ENCODE measurements at regions of chr10 and their contacts with region 1.

Region 1: DNA sequence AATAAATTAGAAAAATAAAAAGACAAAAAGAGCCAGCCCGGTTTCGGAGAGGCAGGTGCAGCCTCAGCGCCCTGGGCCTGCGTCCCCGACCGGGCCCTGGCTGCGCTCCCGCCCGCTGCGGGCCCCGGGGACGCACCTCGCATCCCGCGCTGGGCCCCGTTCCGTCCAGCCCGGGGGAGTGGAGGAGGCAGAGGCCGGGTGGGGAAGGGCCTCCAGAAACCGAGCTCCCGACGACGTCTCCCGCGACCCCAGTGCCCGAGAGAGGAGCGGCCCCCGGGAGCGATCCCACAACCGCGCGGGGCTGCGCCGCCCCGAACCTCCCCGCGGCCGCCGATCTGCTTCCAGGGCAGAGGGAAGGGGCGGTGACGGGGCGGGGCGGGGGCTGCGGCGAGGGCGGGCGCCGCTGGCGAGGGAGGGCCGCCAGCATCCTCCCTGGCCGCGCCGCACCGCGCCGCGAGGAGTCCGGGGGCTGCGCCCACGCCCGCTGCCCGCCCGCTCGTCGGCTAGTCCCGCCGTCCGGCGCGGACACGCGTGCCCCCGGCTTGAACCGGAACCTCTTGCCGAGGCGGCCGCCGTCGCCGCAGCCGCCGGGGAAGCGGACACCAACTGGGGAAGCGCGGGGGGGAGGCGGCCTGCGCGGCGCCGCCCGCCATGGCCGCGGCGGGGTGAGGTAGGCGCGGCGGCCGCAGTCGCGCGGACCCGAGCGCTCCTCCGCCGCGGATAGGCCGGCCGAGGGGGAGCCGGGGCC is at the start of gene CCNY:
- DNase-seq: peak in 1 of 2 experiments; percentile 67
- H3K4me3 ChIP-seq: peak within 1 kb of the TSS; percentile 82
- H3K27ac ChIP-seq: peak within 1 kb of the TSS; percentile 39
- H3K4me1 ChIP-seq: peaks cover 42% of the 10 kb centered on the region
- H3K27me3 ChIP-seq: no peaks in the 10 kb centered on the region
- CTCF ChIP-seq: no peak
- total RNA-seq, gene CCNY: 54.9 and 69.5 TPM in 2 replicates

Region 2: GRCh38 chr10:35126530-35127296 is 209.5 kb before region 1 on chr10 and contains the start of gene CREM:
- CTCF ChIA-PET with region 1: no interaction called
- POLR2A ChIA-PET with region 1: no interaction called
- intact Hi-C with region 1: loop called (anchors 10 kb)
- DNase-seq: peak; percentile 73 to 97
- H3K4me3 ChIP-seq: peak within 1 kb of the TSS; percentile 90
- H3K27ac ChIP-seq: peak within 1 kb of the TSS; percentile 88
- H3K4me1 ChIP-seq: peaks cover 16% of the 10 kb centered on the region
- H3K27me3 ChIP-seq: no peaks in the 10 kb centered on the region
- CTCF ChIP-seq: peak; percentile 86
- total RNA-seq, gene CREM: 25.6 and 28.3 TPM in 2 replicates

Region 3: DNA sequence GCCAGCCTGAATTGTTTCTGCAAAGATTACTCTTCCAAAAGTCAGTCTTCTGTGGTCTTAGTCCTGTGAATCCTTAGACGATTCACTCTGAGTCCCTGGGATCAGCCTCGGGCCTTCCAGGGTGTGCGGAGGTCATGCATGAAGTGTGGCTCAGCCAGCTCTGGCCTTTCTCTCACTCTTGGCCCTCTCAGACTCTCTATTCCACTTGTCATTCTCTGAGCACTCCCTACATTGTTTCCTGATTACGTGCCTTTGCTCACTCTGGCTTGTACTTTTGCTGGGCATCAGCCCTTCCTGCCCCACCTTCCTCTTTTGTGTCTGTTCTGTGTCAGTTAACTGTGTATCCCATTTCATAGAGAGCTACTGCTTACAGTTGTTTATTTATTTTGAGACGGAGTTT is 36.1 kb after region 1 on chr10:
- CTCF ChIA-PET with region 1: no interaction called
- POLR2A ChIA-PET with region 1: no interaction called
- intact Hi-C with region 1: loop called (anchors 5 kb)
- DNase-seq: peak in 1 of 2 experiments; percentile 71
- H3K4me3 ChIP-seq: no peak overlapping the region
- H3K27ac ChIP-seq: no peak overlapping the region
- H3K4me1 ChIP-seq: no peaks in the 10 kb centered on the region
- H3K27me3 ChIP-seq: no peaks in the 10 kb centered on the region
- CTCF ChIP-seq: no peak

Region 4: GRCh38 chr10:35421553-35422178 is 85.4 kb after region 1 on chr10:
- CTCF ChIA-PET with region 1: no interaction called
- POLR2A ChIA-PET with region 1: interaction called, 7 read pairs
- intact Hi-C with region 1: loop called (anchors 5 kb)
- DNase-seq: peak; percentile 53 to 78
- H3K4me3 ChIP-seq: no peak overlapping the region; the same call in 1 of the 2 replicates
- H3K27ac ChIP-seq: peak overlapping the region; percentile 80
- H3K4me1 ChIP-seq: peaks cover 46% of the 10 kb centered on the region
- H3K27me3 ChIP-seq: no peaks in the 10 kb centered on the region
- CTCF ChIP-seq: no peak

Region 5: GRCh38 chr10:35552621-35553342 is 216.5 kb after region 1 on chr10:
- CTCF ChIA-PET with region 1: no interaction called
- POLR2A ChIA-PET with region 1: no interaction called
- intact Hi-C with region 1: loop called (anchors 1 kb)
- DNase-seq: peak; percentile 35 to 74
- H3K4me3 ChIP-seq: no peak overlapping the region
- H3K27ac ChIP-seq: no peak overlapping the region
- H3K4me1 ChIP-seq: peaks cover 7% of the 10 kb centered on the region
- H3K27me3 ChIP-seq: no peaks in the 10 kb centered on the region
- CTCF ChIP-seq: no peak

Measured in PC-9 (cell line).